ENCODE measurements at regions of chr1 and their contacts with region 1.

Region 1: GRCh38 chr1:114979278-114979891 is 50.2 kb upstream of the TSHB start:
- DNase-seq: no peak
- ATAC-seq: peak; percentile 52 to 53
- H3K4me3 ChIP-seq: no peak overlapping the region
- H3K27ac ChIP-seq: no peak overlapping the region
- H3K4me1 ChIP-seq: no peaks in the 10 kb centered on the region
- H3K27me3 ChIP-seq: no peaks in the 10 kb centered on the region
- CTCF ChIP-seq: peak; percentile 88

Region 2: DNA sequence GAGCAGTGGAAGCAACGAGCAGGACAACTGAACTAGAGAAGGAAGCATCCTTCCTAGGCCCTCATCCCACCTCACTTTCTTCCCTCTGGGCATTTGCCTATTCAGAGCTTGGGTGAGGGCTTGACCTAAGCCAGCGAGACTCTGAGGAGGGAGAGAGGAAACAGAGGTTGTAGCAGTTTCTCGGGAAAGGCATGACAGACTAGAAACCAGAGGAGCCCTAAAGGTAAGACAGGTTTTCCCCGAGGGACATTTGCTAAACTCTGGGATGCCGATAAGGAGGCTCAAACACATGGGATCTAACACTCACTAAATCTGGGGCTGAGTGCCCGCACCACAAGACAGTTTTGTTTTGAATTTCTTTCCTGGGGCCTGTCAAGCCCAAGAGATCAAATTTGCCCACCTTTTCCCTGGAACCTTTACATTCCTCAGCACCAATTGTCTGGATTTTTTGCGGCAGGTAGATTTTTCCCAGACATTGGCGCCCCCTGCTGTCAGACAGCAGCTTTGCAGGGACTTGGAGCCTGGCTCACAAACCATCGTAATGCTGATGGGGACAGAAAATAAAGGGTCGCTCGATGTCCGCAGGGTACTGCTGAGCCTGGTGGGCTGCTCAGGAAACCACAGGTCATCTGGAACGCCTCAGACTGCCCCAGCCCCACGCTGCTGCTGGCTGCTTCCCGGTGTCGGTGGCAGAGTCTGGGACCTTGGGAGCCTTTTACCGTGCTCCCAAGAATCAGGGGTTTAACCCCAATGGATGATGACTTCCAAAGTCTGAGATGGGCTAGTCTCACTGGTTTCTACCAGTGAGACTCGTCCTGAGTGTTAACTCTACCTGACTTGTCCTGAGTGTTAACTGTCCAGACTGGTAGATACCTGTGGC is 133.4 kb after region 1 on chr1:
- intact Hi-C with region 1: loop called (anchors 5 kb)
- DNase-seq: peak; percentile 54
- ATAC-seq: peak; percentile 39 to 54
- H3K4me3 ChIP-seq: no peak overlapping the region
- H3K27ac ChIP-seq: no peak overlapping the region
- H3K4me1 ChIP-seq: peaks cover 7% of the 10 kb centered on the region
- H3K27me3 ChIP-seq: no peaks in the 10 kb centered on the region
- CTCF ChIP-seq: peak; percentile 97